ENCODE measurements at regions of chr16 and their contacts with region 1.

Region 1: DNA sequence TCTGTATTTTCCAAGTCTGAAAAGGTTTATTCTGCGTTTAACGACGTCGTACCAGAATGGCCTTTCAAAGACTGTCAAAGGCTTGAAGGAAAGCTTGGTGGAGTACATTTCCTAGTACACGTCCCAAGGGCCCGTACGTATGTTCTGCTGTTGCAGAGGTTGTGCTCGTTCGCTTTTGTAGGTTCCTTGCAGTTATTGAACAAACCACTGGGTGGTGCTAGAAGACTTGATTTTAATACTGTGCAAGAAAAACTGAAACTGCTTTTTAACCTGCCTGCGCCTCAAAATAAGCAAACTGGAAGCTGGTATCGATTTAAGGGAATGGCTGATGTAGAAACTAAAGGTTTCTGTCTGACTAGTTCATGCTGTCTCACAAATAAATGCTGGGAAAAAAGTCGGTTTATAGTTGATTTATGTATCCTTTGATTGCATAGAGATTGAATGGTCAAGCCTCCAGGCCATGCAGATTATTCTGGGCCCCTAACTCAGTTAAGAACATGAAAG is 54.6 kb downstream of the USP10 start:
- DNase-seq: peak; percentile 89
- H3K4me3 ChIP-seq: no peak overlapping the region
- H3K27ac ChIP-seq: no peak overlapping the region
- H3K4me1 ChIP-seq: peaks cover 20% of the 10 kb centered on the region
- H3K27me3 ChIP-seq: no peaks in the 10 kb centered on the region
- CTCF ChIP-seq: peak; percentile 64 to 70
- POLR2A ChIP-seq: no peak

Region 2: DNA sequence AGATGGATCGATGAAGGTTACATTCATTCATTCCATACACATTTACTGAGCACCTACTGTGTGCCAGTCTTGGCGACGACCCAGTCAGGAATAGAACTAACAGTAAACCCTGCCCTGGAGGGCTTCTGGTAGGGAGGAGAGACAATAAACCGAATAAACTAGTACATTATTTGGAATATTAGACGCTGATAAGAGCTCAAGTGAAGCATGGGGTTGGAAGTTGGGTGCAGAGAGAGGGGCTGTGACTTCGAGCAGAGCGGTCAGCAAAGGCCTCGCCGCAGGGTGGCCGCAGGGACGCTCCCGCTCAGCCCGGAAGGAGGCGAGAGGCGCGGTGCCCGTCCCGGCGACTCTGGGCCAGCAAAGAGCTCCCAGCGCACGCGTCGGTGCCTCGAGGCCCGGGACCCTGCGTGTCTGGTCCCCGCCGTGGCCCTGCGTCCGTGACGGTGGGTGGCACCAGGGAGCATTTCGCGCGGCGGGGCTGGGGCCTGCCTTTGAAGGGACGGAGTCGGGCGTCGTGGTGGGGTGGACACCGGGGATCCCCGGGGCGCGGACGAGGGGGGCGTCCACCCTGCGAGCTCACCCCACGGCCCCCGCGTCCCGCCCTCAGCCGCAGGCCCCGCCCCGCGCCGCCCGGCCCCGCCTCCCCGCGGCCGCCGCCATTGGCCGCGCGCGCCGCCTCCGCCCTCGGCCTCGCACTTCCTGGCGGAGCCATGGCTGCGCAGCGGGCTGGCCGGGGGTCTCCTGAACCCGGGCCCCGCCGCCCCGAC is 106.4 kb before region 1 on chr16 and contains the start of gene KLHL36:
- CTCF ChIA-PET with region 1: no interaction called
- POLR2A ChIA-PET with region 1: no interaction called
- dilution Hi-C with region 1: no loop called
- intact Hi-C with region 1: no loop called
- DNase-seq: peak; percentile 33
- H3K4me3 ChIP-seq: peak within 1 kb of the TSS; percentile 32 to 65 (median 40)
- H3K27ac ChIP-seq: no peak within 1 kb of the TSS
- H3K4me1 ChIP-seq: peaks cover 9% of the 10 kb centered on the region
- H3K27me3 ChIP-seq: peaks cover 3% of the 10 kb centered on the region in 2 experiments
- CTCF ChIP-seq: no peak
- POLR2A ChIP-seq: peak; percentile 43
- total RNA-seq, gene KLHL36: 33.3 and 38.8 TPM in 2 replicates

Region 3: DNA sequence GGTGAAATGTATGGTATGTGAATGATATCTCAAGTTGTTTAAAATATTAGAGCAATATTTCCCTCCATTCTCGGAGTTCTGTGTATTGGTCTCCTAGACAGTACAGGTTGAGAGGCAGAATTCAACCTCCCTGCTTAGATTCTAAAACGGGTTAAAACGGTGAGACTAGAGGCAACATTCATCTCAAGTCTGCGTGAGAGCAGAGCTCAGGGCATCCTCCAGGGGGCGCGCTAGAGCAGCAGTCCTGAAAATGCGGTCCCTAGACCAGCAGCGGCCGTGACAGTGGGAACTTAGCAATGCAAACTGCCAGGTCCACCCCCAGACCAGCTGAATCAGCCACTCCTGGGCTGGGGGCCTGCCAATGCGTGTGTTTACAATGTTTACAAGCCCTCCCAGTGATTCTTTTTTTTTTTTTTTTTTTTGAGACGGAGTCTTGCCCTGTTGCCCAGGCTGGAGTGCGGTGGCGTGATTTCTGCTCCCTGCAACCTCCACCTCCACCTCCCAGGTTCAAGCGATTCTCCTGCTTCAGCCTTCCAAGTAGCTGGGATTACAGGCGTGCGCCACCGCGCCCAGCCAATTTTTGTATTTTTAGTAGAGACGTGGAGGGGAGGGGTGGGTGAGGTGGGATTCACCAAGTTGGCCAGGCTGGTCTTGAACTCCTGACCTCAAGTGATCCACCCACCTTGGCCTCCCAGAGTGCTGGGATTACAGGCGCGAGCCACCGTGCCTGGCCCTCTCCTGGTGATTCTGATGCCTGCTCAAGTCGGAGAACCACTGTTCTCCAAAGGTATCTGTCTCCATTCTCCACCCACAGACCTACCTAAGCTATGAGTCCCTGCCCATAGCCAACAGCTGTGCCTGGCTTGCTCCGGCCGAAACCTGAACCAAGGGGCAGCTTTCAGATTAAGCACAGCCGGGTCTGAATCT is 81.9 kb before region 1 on chr16:
- CTCF ChIA-PET with region 1: interaction called, 11 read pairs
- POLR2A ChIA-PET with region 1: no interaction called
- dilution Hi-C with region 1: no loop called
- intact Hi-C with region 1: no loop called
- DNase-seq: peak; percentile 72
- H3K4me3 ChIP-seq: no peak overlapping the region
- H3K27ac ChIP-seq: no peak overlapping the region
- H3K4me1 ChIP-seq: no peaks in the 10 kb centered on the region
- H3K27me3 ChIP-seq: peaks cover 2 to 3% of the 10 kb centered on the region in 2 experiments
- CTCF ChIP-seq: peak; percentile 93 to 97
- POLR2A ChIP-seq: no peak

Region 4: GRCh38 chr16:84765616-84766580 is 11.5 kb after region 1 on chr16:
- CTCF ChIA-PET with region 1: interaction called, 10 read pairs
- POLR2A ChIA-PET with region 1: no interaction called
- dilution Hi-C with region 1: no loop called
- intact Hi-C with region 1: no loop called
- DNase-seq: no peak
- H3K4me3 ChIP-seq: no peak overlapping the region
- H3K27ac ChIP-seq: no peak overlapping the region
- H3K4me1 ChIP-seq: no peaks in the 10 kb centered on the region
- H3K27me3 ChIP-seq: no peaks in the 10 kb centered on the region
- CTCF ChIP-seq: no peak
- POLR2A ChIP-seq: no peak

Region 5: GRCh38 chr16:84806256-84806889 is 52.0 kb after region 1 on chr16:
- CTCF ChIA-PET with region 1: interaction called, 3 read pairs
- POLR2A ChIA-PET with region 1: no interaction called
- dilution Hi-C with region 1: no loop called
- intact Hi-C with region 1: loop called (anchors 1 kb)
- DNase-seq: peak; percentile 80
- H3K4me3 ChIP-seq: peak overlapping the region in 1 of 3 experiments; percentile 28
- H3K27ac ChIP-seq: peak overlapping the region; percentile 41
- H3K4me1 ChIP-seq: peaks cover 19% of the 10 kb centered on the region
- H3K27me3 ChIP-seq: peaks cover 2 to 6% of the 10 kb centered on the region in 2 experiments
- CTCF ChIP-seq: no peak
- POLR2A ChIP-seq: no peak

Region 6: DNA sequence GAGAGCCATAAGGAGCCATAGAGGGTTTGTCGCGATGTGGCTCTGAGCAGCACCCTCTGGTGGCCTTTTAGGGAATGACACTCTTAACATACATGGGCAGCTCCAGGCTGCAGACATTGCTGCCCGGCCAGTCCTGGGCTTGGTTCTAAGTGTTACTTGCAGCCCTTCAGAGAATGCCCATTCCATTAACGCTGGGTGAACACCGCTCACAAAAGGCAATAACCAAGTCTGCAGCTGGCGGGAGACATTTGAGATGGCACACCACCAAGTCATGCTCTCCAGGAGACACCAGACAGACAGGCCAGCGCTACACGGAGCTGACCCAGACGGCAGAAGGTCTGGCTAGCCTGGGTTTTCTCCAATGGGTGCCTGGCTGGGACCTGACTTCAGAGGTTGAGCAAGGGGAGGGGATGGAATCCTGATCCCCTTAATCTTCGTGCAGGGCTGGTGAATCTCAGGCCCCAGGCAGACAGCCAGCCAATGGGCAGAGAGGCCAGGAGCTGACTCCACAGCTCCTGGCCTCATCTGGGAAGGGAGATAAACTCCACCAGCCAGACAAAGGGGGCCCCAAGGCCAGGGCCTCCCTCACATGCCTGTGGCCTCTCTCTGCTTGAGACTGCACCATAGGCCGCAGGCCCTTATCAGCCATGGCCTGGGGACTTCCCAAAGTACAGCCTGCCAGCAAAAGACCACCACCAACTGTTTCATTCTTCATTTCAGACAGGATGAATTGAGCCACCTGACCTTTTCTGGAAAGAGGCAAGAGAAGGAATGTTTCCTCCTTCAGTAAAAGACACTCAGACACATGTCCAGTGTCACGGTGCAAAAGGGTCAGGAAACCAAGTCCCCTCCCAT is 198.2 kb after region 1 on chr16:
- CTCF ChIA-PET with region 1: interaction called, 292 read pairs
- POLR2A ChIA-PET with region 1: no interaction called
- dilution Hi-C with region 1: loop called (anchors 25 kb)
- intact Hi-C with region 1: loop called (anchors 1 kb)
- DNase-seq: peak; percentile 87
- H3K4me3 ChIP-seq: no peak overlapping the region
- H3K27ac ChIP-seq: no peak overlapping the region
- H3K4me1 ChIP-seq: no peaks in the 10 kb centered on the region
- H3K27me3 ChIP-seq: peaks cover 0 to 2% of the 10 kb centered on the region in 2 experiments
- CTCF ChIP-seq: peak; percentile 88 to 90
- POLR2A ChIP-seq: no peak